Naive thymus-derived CD4-positive, alpha-beta T cell (primary cell): ENCODE measurements at regions of chr4 and their contacts with region 1.

Region 1: GRCh38 chr4:84971319-84971932 is 4.9 kb upstream of the WDFY3 start:
- DNase-seq: no peak
- ATAC-seq: no peak
- H3K4me3 ChIP-seq: no peak overlapping the region
- H3K4me3 Mint-ChIP-seq: no peak overlapping the region
- H3K27ac ChIP-seq: no peak overlapping the region
- H3K27ac Mint-ChIP-seq: no peak overlapping the region
- H3K4me1 ChIP-seq: no peaks in the 10 kb centered on the region
- H3K4me1 Mint-ChIP-seq: peaks cover 7 to 10% (median 10%) of the 10 kb centered on the region in 7 donors
- H3K27me3 ChIP-seq: no peaks in the 10 kb centered on the region
- H3K27me3 Mint-ChIP-seq: peaks cover 27 to 44% (median 35%) of the 10 kb centered on the region in 5 donors

Region 2: DNA sequence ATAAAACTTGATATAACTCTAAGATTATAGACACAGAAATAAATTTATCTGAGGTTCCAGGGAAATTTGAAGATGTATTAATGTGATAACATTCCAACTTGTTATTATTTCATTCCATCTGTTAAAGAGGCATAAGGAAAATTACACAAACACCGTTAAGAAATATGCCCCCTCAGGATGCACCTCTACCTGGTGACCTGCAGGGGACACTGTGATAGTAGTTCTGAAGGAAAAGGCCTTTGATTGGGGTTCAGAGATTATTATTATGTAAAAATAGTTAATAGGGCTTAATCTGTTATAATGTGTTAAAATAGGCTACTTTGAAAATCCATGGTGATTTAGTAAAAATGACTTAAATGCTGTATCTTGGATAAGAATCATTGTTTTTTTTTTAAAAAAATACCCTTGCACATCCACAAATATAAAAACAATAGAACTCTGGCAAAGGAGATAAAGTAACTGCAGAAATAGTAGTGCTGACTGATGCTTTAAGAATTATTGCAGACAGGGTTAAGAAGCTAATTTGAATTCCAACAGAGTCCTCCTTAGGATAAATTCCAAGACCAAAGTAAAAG is 1480.5 kb before region 1 on chr4:
- CTCF ChIA-PET with region 1: interaction called, 6 read pairs
- POLR2A ChIA-PET with region 1: no interaction called
- intact Hi-C with region 1: loop called in 1 of 2 experiments (anchors 10 kb)
- DNase-seq: peak in 6 of 9 donors; percentile 17 to 45 (median 31)
- ATAC-seq: peak; percentile 81
- H3K4me3 ChIP-seq: no peak overlapping the region
- H3K4me3 Mint-ChIP-seq: no peak overlapping the region
- H3K27ac ChIP-seq: no peak overlapping the region
- H3K27ac Mint-ChIP-seq: no peak overlapping the region
- H3K4me1 ChIP-seq: no peaks in the 10 kb centered on the region
- H3K4me1 Mint-ChIP-seq: peaks cover 3 to 12% (median 10%) of the 10 kb centered on the region in 7 donors
- H3K27me3 ChIP-seq: no peaks in the 10 kb centered on the region
- H3K27me3 Mint-ChIP-seq: peaks cover 0 to 4% (median 0%) of the 10 kb centered on the region in 5 donors

Region 3: GRCh38 chr4:84470204-84470785 is 501.1 kb before region 1 on chr4:
- CTCF ChIA-PET with region 1: no interaction called
- POLR2A ChIA-PET with region 1: no interaction called
- intact Hi-C with region 1: loop called in 1 of 2 experiments (anchors 2 kb)
- DNase-seq: no peak
- ATAC-seq: no peak
- H3K4me3 ChIP-seq: no peak overlapping the region
- H3K4me3 Mint-ChIP-seq: no peak overlapping the region
- H3K27ac ChIP-seq: no peak overlapping the region
- H3K27ac Mint-ChIP-seq: no peak overlapping the region
- H3K4me1 ChIP-seq: no peaks in the 10 kb centered on the region
- H3K4me1 Mint-ChIP-seq: peaks cover 0 to 1% (median 0%) of the 10 kb centered on the region in 7 donors
- H3K27me3 ChIP-seq: peaks cover 0 to 3% of the 10 kb centered on the region in 2 donors
- H3K27me3 Mint-ChIP-seq: peaks cover 6 to 41% (median 25%) of the 10 kb centered on the region in 5 donors

Region 4: DNA sequence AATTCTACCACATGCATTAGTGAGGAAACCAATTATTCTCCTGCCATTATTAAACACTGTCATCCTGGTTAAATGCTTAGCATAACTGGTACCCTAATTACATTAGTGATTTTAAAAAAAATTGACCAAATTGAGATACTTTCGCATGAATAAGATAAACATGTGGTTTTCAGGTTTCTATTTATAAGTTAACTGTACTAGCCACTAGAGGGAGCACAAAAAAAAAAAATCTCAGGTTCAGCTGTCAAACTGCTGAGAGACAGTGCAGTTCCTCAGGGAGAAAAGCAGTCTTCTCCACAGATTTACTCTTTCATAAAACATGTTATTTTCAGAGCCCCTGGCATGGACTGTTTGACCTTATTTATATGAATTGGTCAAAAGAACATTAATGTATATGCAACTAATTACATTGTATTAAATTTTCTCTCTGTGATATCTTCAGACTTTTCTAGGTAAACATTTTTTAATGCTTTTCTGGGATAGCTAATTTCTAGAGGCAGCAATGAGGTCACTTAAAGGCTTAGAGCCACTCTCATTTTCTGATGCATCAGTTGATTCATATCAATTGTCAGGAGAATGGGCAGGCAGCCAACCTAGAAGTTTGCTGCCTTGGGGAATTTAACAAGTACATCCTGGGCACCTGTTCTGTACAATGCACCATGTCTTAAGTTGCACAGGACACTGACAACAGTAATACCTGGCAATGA is 221.0 kb before region 1 on chr4:
- CTCF ChIA-PET with region 1: no interaction called
- POLR2A ChIA-PET with region 1: no interaction called
- intact Hi-C with region 1: loop called (anchors 1 to 10 kb)
- DNase-seq: peak in 2 of 9 donors; percentile 3 to 8
- ATAC-seq: no peak
- H3K4me3 ChIP-seq: no peak overlapping the region
- H3K4me3 Mint-ChIP-seq: no peak overlapping the region
- H3K27ac ChIP-seq: no peak overlapping the region
- H3K27ac Mint-ChIP-seq: no peak overlapping the region
- H3K4me1 ChIP-seq: no peaks in the 10 kb centered on the region
- H3K4me1 Mint-ChIP-seq: no peaks in the 10 kb centered on the region
- H3K27me3 ChIP-seq: no peaks in the 10 kb centered on the region
- H3K27me3 Mint-ChIP-seq: peaks cover 0 to 10% (median 0%) of the 10 kb centered on the region in 5 donors

Region 5: GRCh38 chr4:85569730-85570299 is 598.4 kb after region 1 on chr4:
- CTCF ChIA-PET with region 1: no interaction called
- POLR2A ChIA-PET with region 1: no interaction called
- intact Hi-C with region 1: no loop called
- DNase-seq: no peak
- ATAC-seq: no peak
- H3K4me3 ChIP-seq: no peak overlapping the region
- H3K4me3 Mint-ChIP-seq: no peak overlapping the region
- H3K27ac ChIP-seq: no peak overlapping the region
- H3K27ac Mint-ChIP-seq: no peak overlapping the region
- H3K4me1 ChIP-seq: no peaks in the 10 kb centered on the region
- H3K4me1 Mint-ChIP-seq: no peaks in the 10 kb centered on the region
- H3K27me3 ChIP-seq: no peaks in the 10 kb centered on the region
- H3K27me3 Mint-ChIP-seq: no peaks in the 10 kb centered on the region